Activated T-helper 2 cell treated with anti-CD3 and anti-CD28 coated beads, Interferon-gamma antibody, Interleukin-2, Interleukin-4, amounts not matched to agents 10 μg/mL and 5 μg/mL and 100 μg/mL, durations not matched to agents 14 hours and 24 hours and 36 hours (primary cell): ENCODE measurements at regions of chr9 and their contacts with region 1.

Region 1: GRCh38 chr9:34376596-34377403 is at the start of gene MYORG:
- DNase-seq: peak; percentile 97
- H3K4me3 Mint-ChIP-seq: peak within 1 kb of the TSS; percentile 86
- H3K27ac Mint-ChIP-seq: no peak within 1 kb of the TSS
- H3K4me1 Mint-ChIP-seq: peaks cover 21% of the 10 kb centered on the region
- H3K27me3 Mint-ChIP-seq: no peaks in the 10 kb centered on the region
- total RNA-seq, gene MYORG: 1.6 TPM in 2 replicates

Region 2: DNA sequence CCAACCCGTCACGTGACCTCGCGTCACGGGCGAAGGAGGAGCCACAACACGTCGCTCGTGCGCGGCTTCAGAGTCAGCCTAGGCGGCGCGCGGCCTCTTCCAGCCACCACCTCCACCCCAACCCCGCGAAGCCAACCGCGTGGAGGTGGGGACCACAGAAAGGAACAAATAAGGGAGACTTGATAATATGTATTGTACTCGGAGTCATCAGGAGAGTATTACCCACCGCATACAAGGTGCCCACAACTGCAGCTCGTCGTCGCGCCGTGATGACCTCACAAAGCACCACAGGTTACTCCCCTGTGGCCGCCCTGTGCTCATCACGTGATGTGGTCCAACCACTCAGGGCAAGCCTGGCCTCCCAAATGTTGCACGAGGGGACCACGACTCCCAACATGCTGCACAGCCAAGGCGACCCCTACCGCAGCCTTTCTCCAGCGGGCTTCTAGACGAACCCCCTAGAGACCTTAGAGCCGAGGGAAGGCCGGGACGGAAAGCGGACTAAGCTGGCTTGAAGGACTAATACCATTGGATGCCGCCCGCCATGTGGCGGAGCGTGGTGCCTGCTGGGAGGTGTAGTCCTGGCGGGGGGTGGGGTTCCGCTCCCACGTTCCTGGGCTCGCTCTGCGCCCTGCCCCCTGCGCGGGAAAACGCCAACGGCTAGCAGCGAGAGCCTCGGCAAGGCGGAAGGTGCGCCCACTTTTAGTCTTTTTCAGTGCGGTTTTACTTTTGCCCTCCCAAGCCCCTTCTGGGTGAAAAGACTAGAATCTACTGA is 327.7 kb before region 1 on chr9:
- intact Hi-C with region 1: loop called (anchors 2 kb)
- DNase-seq: peak; percentile 96
- H3K4me3 Mint-ChIP-seq: peak overlapping the region; percentile 91
- H3K27ac Mint-ChIP-seq: peak overlapping the region; percentile 98
- H3K4me1 Mint-ChIP-seq: peaks cover 39% of the 10 kb centered on the region
- H3K27me3 Mint-ChIP-seq: no peaks in the 10 kb centered on the region

Region 3: GRCh38 chr9:34178520-34179212 is 198.1 kb before region 1 on chr9 and contains the start of gene UBAP1:
- intact Hi-C with region 1: loop called (anchors 2 kb)
- DNase-seq: peak; percentile 95
- H3K4me3 Mint-ChIP-seq: peak within 1 kb of the TSS; percentile 90
- H3K27ac Mint-ChIP-seq: peak within 1 kb of the TSS; percentile 94
- H3K4me1 Mint-ChIP-seq: peaks cover 11% of the 10 kb centered on the region
- H3K27me3 Mint-ChIP-seq: no peaks in the 10 kb centered on the region
- total RNA-seq, gene UBAP1: 33.6 and 33.7 TPM in 2 replicates

Region 4: DNA sequence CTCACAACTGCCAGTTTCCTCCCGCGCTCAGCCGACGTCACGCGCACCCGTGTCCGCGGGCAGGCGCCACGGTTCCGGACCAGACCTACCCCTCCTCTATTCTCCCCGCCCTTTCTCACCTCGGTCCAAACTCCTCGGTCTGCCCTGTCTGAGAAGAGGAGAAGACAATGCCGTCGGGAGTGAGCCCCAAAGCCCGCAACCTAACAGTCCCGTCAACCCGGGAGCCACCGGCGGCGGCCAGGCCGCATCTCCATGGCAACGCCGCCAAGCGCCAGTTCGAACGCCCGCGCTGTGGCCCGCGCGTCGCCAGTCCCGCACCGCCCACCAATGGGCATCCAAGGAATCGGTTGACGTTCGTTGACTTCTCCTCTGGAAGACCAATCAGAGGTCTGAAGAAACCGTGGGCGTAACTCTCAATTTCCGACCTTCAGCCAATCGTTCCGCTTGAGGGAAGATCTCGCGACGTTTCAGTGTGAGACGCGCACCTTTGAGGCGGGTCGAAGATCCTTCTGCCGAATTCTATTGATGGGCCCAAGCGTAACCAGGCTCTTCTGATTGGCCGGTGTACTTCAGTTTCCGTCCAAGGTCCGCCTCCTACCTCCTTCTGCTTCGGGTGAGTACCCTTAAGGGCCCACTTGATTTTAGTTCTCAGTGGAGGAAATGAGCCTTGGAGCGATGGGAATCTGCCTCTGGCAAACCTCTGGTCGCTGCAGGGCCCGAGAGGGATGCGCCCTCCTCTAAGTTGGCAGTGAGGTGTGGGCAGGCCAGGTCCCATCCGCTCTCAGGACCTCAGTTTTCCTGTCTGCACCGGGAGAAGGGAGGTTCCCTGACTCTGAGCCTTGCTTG is 47.6 kb before region 1 on chr9 and contains the starts of genes KIF24 and NUDT2:
- intact Hi-C with region 1: loop called (anchors 1 kb)
- DNase-seq: peak; percentile 97
- H3K4me3 Mint-ChIP-seq: peak within 1 kb of the TSS; percentile 98
- H3K27ac Mint-ChIP-seq: peak within 1 kb of the TSS; percentile 94
- H3K4me1 Mint-ChIP-seq: peaks cover 34% of the 10 kb centered on the region
- H3K27me3 Mint-ChIP-seq: no peaks in the 10 kb centered on the region
- total RNA-seq, gene KIF24: 4.8 and 5.0 TPM in 2 replicates
- total RNA-seq, gene NUDT2: 30.8 and 33.0 TPM in 2 replicates

Region 5: DNA sequence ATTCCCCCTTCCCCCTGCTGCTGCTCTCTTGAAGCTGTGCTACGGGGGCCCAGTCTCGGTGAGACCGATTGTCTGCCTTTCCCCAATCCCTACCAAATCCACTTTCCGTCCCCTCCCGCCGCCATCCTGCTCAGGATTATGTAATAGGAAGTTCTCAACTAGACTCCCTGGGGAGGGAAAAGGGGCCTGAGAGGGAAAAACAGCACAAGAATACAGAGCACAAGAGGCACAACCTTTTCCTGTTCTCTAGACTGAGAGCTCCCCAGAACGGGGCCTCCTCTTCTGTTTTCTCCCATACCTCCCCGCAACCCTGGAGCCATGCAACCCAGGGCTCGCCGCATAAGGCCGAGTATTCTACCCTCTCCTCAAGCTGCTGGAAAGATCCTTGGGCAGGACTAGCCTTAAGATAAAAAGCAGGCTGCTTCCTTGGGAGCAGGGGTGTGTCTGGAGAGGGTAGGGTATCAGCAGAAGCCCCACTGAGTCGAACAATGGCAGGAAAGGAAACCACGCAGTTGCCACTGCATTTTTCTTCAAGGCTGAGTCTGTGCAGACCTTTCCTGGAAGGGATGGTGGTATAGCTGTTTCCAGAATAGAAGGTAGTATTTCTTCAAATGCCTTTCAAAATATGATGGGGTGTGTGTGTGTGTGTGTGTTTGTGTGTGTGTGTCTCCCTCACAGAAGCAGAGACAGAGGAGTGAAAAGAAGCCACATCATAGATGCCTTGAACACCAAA is 13.0 kb before region 1 on chr9:
- intact Hi-C with region 1: no loop called
- DNase-seq: no peak
- H3K4me3 Mint-ChIP-seq: no peak overlapping the region
- H3K27ac Mint-ChIP-seq: no peak overlapping the region
- H3K4me1 Mint-ChIP-seq: peaks cover 9% of the 10 kb centered on the region
- H3K27me3 Mint-ChIP-seq: no peaks in the 10 kb centered on the region

Region 6: DNA sequence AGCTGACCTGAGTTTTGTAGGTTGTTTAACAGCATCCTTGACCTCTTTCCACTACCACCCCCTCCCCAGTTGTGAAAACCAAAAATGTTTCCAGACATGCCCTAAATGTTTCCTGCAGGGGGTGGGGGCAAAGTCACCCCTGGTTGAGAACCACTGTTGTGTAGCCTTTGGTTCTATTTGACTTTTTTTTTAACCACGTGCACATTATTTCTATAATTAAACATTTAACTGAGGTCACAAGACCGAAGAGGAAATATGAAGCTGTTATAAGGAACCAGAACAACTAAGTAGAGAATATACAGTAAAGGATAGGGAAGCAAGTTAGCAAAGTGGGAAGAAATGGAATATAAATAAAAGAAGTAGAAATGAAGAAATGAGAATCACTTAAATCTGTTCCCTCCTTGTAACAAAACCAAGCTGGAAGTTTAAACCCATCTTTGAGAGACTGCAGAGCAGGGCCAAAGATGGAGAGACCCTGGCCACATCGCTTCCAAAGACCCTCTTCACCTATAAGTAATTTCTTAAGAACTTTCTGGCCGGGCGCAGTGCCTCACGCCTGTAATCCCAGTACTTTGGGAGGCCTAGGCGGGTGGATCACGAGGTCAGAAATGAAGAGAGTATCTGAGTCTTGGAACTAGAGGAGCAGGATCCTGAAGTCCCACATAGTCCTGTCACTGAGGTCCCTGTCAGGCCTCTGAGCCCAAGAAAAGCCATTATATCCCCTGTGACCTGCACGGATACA is 1259.5 kb after region 1 on chr9:
- intact Hi-C with region 1: loop called (anchors 5 kb)
- DNase-seq: no peak
- H3K4me3 Mint-ChIP-seq: no peak overlapping the region
- H3K27ac Mint-ChIP-seq: peak overlapping the region; percentile 76
- H3K4me1 Mint-ChIP-seq: peaks cover 48% of the 10 kb centered on the region
- H3K27me3 Mint-ChIP-seq: no peaks in the 10 kb centered on the region